ENCODE measurements at regions of chr7 and their contacts with region 1.

Region 1: DNA sequence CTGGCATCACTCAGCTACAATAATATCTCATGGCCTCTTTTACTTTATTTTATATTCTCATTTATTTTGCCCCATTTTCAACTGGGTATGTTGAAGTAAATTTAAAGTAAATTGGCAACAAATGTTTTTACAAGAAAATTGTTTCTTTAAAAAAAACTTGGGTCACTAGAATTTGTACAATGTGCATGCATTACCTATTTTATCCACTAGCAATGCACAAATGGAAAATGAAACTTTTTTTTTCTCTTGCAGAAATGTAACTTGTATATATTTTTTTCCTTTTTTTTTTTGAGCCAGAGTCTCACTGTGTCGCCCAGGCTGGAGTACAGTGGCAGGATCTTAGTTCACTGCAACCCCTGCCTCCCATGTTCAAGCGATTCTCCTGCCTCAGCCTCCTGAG is 10.3 kb upstream of the H2AZ2 start:
- DNase-seq: no peak
- ATAC-seq: no peak
- H3K4me3 Mint-ChIP-seq: no peak overlapping the region
- H3K27ac Mint-ChIP-seq: no peak overlapping the region
- H3K4me1 Mint-ChIP-seq: peaks cover 13% of the 10 kb centered on the region
- H3K27me3 Mint-ChIP-seq: peaks cover 4% of the 10 kb centered on the region

Region 2: GRCh38 chr7:44875241-44875640 is 17.1 kb after region 1 on chr7:
- CTCF ChIA-PET with region 1: interaction called, 58 read pairs
- POLR2A ChIA-PET with region 1: interaction called, 18 read pairs
- DNase-seq: no peak
- ATAC-seq: no peak
- H3K4me3 Mint-ChIP-seq: no peak overlapping the region
- H3K27ac Mint-ChIP-seq: no peak overlapping the region
- H3K4me1 Mint-ChIP-seq: peaks cover 17% of the 10 kb centered on the region
- H3K27me3 Mint-ChIP-seq: no peaks in the 10 kb centered on the region

Region 3: DNA sequence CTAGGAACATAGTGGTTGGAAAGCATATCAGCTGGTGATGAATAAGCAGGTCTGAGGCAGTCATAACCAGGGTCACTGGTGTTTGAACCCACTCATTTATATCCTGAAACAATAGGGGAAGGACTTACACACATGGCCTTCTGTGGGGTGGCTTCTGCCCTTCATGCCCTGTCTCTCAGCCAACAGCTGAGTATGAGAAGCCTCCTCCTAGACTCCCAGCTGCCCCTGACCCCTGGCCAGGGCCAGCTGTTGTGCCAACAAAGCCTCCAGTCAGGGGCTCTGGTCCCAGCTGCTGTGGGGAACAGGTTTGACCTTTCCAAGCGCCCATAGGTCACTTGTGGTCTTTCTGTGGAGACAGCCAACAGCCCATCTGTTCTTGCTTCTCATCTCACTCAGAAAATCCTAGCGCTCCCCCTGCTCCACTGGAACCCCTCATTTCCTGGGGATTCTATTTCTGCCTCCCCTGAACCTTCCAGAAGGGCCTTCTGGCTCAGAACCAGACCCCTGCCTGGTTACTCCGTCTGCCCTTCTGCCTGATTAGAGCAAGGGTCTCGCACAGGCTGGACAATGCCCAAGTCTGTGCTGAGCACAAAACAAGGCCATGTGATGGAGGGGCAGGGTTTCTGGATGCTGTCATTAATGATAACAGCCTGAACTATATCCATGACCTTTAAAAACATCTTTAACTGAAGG is 36.9 kb after region 1 on chr7:
- CTCF ChIA-PET with region 1: interaction called, 38 read pairs
- POLR2A ChIA-PET with region 1: interaction called, 3 read pairs
- DNase-seq: no peak
- ATAC-seq: no peak
- H3K4me3 Mint-ChIP-seq: no peak overlapping the region
- H3K27ac Mint-ChIP-seq: no peak overlapping the region
- H3K4me1 Mint-ChIP-seq: peaks cover 27% of the 10 kb centered on the region
- H3K27me3 Mint-ChIP-seq: no peaks in the 10 kb centered on the region

Region 4: DNA sequence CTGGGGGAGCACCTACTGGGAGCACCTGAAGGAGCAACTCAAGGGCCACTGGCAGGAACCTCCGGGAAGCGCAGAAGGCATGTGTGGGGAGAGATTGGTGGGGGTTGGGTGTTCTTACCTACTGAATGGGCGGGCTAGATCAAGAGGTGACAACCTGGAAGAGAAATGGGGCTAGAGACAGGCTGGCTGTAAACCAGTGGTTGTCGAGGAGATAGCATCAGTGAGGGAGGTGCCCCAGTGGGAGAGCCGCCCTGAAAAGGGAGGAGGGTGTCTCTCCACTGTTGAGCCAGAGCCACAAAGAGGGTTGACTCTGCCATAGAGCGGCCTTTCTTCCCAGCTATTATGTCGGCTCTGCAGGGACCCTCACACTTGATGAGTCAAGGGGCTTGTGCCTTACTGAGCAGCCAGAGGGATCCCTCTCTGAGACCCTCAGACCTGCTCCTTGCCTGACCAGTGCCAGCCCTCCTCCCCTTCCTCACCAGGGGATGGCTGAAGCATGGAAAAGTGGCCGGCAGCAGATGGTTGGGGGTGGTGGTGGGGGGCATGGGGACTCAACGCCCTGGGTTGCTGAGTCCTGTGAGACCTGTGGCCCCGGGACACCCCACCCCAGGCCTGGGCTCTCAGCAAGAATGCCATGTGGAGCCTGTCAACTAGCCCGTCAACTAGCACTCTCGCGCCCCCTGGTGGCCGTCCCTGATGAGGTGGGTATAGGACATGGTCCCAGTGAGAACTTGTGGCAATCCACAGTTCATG is 63.6 kb after region 1 on chr7:
- CTCF ChIA-PET with region 1: interaction called, 96 read pairs
- POLR2A ChIA-PET with region 1: interaction called, 4 read pairs
- DNase-seq: peak; percentile 97
- ATAC-seq: peak; percentile 98
- H3K4me3 Mint-ChIP-seq: no peak overlapping the region
- H3K27ac Mint-ChIP-seq: peak overlapping the region; percentile 39
- H3K4me1 Mint-ChIP-seq: peaks cover 25% of the 10 kb centered on the region
- H3K27me3 Mint-ChIP-seq: peaks cover 7% of the 10 kb centered on the region

Measured in activated CD8-positive, alpha-beta T cell treated with anti-CD3 and anti-CD28 coated beads, Interleukin-2, amount 10 ng/mL, durations not matched to agents 7 days and 5 days (primary cell).